ENCODE measurements at regions of chr6 and their contacts with region 1.

Region 1: GRCh38 chr6:145929037-145929633 is 35.0 kb downstream of the SHPRH start:
- H3K4me3 ChIP-seq: no peak overlapping the region
- H3K27ac ChIP-seq: no peak overlapping the region
- H3K4me1 ChIP-seq: no peaks in the 10 kb centered on the region
- CTCF ChIP-seq: no peak

Region 2: DNA sequence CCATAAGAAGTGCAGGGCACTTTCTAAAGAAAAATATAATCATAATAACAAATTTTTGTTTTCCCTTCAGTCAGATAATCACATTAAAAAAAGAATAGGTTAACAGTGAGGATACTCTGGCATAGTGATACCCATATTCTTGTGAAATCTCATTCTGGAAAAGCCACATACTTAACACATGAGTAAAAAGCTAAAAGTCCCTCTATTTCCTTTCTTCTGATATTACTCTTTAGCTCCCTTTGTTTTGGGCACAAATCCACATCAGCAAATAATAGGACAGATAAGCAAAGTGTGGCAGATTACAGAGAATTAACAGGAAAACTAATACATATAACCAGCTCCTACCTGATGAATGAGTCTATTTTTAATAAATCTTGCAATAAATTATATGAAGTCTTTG is 19.2 kb after region 1 on chr6:
- CTCF ChIA-PET with region 1: interaction called, 22 read pairs
- POLR2A ChIA-PET with region 1: no interaction called
- H3K4me3 ChIP-seq: no peak overlapping the region
- H3K27ac ChIP-seq: no peak overlapping the region
- H3K4me1 ChIP-seq: no peaks in the 10 kb centered on the region
- CTCF ChIP-seq: no peak

Region 3: GRCh38 chr6:146219101-146219500 is 290.0 kb after region 1 on chr6:
- CTCF ChIA-PET with region 1: no interaction called
- POLR2A ChIA-PET with region 1: no interaction called
- H3K4me3 ChIP-seq: no peak overlapping the region
- H3K27ac ChIP-seq: no peak overlapping the region
- H3K4me1 ChIP-seq: no peaks in the 10 kb centered on the region
- CTCF ChIP-seq: no peak

Region 4: DNA sequence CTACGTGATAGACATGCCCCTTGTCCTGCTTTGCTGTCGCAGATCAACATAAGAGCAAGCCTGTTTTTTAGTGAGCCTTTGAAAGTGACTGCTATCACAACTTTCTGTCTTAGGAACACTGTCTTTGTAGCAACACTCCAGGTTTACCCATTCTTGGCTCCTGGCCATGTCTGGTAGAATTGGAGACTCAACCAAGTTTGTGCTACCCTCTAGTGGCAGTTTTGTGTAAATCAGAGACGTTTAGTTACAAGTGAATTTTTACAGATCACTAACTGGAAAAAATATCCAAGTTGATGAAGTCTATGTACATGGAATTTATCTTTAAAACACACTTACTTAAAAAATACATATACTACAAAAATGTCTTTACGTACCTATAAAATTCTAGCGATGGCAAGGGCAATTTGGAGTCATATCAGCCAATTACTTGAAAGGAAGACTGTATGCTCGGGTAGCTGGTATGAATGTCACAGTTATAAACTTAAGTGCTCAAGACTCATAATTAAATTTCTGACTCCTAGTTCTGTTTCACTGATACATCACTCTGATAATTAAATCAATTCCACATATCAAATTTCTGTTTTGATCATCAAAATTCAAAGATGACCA is 771.0 kb after region 1 on chr6:
- CTCF ChIA-PET with region 1: interaction called, 13 read pairs
- POLR2A ChIA-PET with region 1: no interaction called
- H3K4me3 ChIP-seq: no peak overlapping the region
- H3K27ac ChIP-seq: no peak overlapping the region
- H3K4me1 ChIP-seq: no peaks in the 10 kb centered on the region
- CTCF ChIP-seq: peak; percentile 42

Measured in HEK293 (cell line).